H1 (cell line): ENCODE measurements at regions of chr9 and their contacts with region 1.

Region 1: DNA sequence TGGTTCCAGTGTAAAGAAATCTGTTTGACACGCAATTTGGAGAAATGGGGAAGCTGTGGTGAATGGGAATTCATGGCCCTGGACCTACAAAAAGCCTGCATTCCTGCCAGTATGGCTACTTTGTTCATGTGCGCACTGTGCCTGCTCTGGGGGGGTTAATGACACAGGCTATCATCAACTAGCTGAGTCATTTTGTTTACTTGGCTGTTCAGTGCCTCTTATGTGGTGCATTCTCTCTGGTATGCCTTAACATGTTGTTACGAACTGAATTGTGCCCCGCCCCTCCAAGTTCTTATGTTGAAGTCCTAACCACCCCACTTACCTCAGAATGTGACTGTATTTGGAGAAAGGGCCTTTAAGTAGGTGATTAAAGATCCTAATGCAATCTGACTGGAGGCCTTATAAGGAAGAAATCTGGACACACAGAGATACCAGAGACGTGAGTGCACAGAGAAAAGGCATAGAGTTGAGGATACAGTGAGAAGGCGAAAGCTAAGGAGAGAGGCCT is 20.4 kb upstream of the UBAP1 start:
- DNase-seq: no peak
- H3K4me3 ChIP-seq: no peak overlapping the region
- H3K27ac ChIP-seq: no peak overlapping the region
- H3K4me1 ChIP-seq: no peaks in the 10 kb centered on the region
- H3K27me3 ChIP-seq: no peaks in the 10 kb centered on the region
- CTCF ChIP-seq: no peak
- EP300 ChIP-seq: no peak
- POLR2A ChIP-seq: no peak
- RAD21 ChIP-seq: no peak

Region 2: DNA sequence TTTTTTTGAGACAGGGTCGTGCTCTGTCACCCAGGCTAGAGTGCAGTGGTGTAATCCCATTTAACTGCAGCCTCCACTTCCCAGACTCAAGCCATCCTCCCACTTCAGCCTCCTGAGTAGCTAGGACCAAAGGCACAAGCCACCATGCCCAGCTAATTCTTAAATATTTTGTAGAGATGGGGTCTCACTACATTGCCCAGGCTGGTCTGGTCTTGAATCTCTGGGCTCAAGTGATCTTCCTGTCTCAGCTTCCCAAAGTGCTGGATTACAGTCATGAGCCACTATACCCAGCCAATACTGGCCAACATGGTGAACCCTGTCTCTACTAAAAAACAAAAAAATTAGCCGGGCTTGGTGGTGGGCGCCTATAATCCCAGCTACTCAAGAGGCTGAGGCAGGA is 38.7 kb before region 1 on chr9:
- CTCF ChIA-PET with region 1: no interaction called
- POLR2A ChIA-PET with region 1: no interaction called
- DNase-seq: no peak
- H3K4me3 ChIP-seq: no peak overlapping the region
- H3K27ac ChIP-seq: no peak overlapping the region
- H3K4me1 ChIP-seq: no peaks in the 10 kb centered on the region
- H3K27me3 ChIP-seq: no peaks in the 10 kb centered on the region
- CTCF ChIP-seq: no peak
- EP300 ChIP-seq: no peak
- POLR2A ChIP-seq: no peak
- RAD21 ChIP-seq: no peak

Region 3: GRCh38 chr9:34171753-34172535 is 13.5 kb after region 1 on chr9:
- CTCF ChIA-PET with region 1: interaction called, 11 read pairs
- POLR2A ChIA-PET with region 1: interaction called, 4 read pairs
- DNase-seq: no peak
- H3K4me3 ChIP-seq: no peak overlapping the region
- H3K27ac ChIP-seq: no peak overlapping the region
- H3K4me1 ChIP-seq: no peaks in the 10 kb centered on the region
- H3K27me3 ChIP-seq: no peaks in the 10 kb centered on the region
- CTCF ChIP-seq: no peak
- EP300 ChIP-seq: no peak
- POLR2A ChIP-seq: no peak
- RAD21 ChIP-seq: no peak